Motor neuron (in vitro differentiated cells): ENCODE measurements at regions of chr18 and their contacts with region 1.

Region 1: DNA sequence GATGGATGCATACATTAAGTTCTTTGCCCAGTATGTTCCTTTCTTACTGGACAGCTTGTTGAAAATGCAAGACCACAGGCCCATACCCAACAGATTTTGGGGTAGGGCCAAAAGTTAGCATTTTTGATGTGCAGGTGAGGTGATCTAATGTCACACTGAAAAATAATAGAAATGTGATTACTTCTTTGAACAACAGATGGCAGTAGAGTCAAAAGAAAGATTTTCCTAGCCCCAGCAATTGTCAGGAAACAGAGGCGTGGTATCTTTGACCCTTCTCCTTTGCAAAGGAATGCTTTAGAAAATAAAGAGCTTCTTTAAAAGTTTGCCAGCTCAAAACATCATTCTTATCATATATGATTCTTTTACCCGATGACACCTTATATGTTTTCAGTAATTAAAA is 343.6 kb upstream of the SYT4 start:
- ATAC-seq: peak; percentile 35 to 67 (median 43)
- H3K4me3 ChIP-seq: no peak overlapping the region
- H3K27ac ChIP-seq: no peak overlapping the region
- H3K4me1 ChIP-seq: no peaks in the 10 kb centered on the region

Region 2: DNA sequence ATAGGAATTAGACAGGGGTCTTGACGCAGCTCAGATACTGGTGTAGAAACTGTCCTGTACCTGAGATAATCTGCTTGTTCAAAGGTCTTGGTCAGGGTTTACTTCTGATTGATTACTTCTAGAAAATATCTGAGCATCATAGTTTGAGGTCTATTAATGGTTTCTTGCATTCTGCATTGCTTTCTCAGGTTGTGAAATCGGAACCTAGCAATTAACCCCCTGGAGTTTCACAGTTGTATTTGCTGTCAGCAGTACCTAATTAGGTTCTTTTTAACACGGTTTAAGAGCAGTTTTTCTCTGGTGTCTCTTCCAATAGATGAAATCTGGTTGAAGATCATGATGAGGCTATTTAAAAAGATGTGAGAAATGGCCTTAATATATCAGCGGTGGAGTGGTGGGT is 84.9 kb after region 1 on chr18:
- in situ Hi-C with region 1: no loop called
- ATAC-seq: no peak
- H3K4me3 ChIP-seq: no peak overlapping the region
- H3K27ac ChIP-seq: no peak overlapping the region
- H3K4me1 ChIP-seq: peaks cover 0 to 3% of the 10 kb centered on the region in 2 donors

Region 3: GRCh38 chr18:44325903-44326635 is 705.1 kb after region 1 on chr18:
- in situ Hi-C with region 1: loop called in 2 of 9 experiments (anchors 25 kb)
- ATAC-seq: peak in 4 of 8 experiments; percentile 21 to 59 (median 49)
- H3K4me3 ChIP-seq: no peak overlapping the region
- H3K27ac ChIP-seq: no peak overlapping the region
- H3K4me1 ChIP-seq: no peaks in the 10 kb centered on the region